ENCODE measurements at regions of chr12 and their contacts with region 1.

Region 1: GRCh38 chr12:124321040-124321481 is 26.2 kb downstream of the RFLNA start:
- DNase-seq: peak; percentile 48
- H3K27ac ChIP-seq: no peak overlapping the region
- CTCF ChIP-seq: peak; percentile 70

Region 2: DNA sequence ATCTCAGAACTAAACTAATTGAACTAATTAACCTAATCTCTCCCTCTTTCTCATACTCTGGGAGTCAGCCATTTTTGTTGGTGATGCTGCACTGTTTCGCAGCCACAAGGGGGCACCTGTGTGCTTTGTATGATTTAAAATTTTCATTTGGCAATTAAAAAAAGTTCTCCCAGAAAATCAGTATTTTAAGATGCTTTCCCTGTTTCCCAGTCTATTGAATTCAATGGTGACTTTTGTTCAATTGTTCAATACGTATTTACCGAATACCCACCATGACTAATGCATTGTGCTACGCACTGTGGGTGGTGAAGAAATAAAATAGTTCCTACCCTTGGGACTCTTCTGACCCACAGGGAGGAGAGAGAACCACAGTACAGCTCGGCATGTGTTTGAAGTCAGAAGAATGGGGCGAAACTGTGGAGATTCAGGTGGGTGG is 284.4 kb before region 1 on chr12:
- CTCF ChIA-PET with region 1: interaction called, 16 read pairs
- POLR2A ChIA-PET with region 1: no interaction called
- DNase-seq: peak; percentile 50
- H3K27ac ChIP-seq: no peak overlapping the region
- CTCF ChIP-seq: peak; percentile 90

Region 3: GRCh38 chr12:124506145-124506831 is 185.2 kb after region 1 on chr12:
- CTCF ChIA-PET with region 1: no interaction called
- POLR2A ChIA-PET with region 1: no interaction called
- DNase-seq: no peak
- H3K27ac ChIP-seq: peak overlapping the region; percentile 100
- CTCF ChIP-seq: no peak